Esophagus squamous epithelium (tissue), 5 donors: ENCODE measurements at regions of chr3 and their contacts with region 1.

Region 1: DNA sequence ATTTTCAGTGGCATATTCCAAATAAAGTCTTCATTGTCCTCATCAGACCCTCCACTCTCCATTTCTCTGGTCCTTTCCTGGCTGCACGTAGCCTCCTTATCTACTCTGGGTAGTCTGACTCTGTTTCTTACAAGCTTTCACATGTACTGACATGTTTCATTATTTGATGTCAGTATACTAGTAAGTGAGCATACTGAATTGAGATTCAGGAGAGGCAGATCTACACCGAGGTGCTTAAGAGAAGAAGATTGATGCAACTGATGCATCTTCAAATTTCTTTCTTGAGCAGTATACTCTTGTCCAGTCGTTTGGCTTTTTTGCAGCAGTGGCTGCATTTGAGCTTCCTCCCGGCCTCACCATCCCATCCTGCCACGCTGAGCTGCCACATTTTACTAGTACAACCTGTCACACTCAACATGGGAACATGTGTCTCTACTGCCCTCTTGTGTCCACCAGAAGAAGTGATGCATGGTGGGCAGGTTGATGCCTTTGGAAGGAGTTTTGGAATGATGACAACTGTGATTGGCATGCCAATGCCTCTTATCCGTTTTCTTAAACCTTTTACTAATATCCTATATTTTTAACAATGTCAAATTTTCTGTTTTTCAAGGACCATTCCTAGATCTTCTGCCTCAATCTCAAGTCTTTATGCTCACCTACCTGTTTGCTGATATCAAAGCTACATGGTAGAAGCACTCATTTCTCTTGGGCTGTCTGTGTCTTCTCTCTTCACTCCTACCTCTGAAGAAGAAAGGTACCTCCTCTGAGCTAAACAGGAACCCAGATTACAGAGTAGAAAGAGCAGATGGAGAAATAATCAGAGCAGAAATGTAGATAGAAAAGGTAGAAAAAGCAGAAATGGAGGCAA is 38.7 kb downstream of the GUCA1C start:
- DNase-seq: no peak
- H3K4me3 ChIP-seq: no peak overlapping the region
- H3K27ac ChIP-seq: no peak overlapping the region
- H3K4me1 ChIP-seq: no peaks in the 10 kb centered on the region
- H3K27me3 ChIP-seq: peaks cover 0 to 5% (median 0%) of the 10 kb centered on the region in 4 donors
- CTCF ChIP-seq: peak; percentile 48 to 78 (median 70)
- POLR2A ChIP-seq: no peak

Region 2: DNA sequence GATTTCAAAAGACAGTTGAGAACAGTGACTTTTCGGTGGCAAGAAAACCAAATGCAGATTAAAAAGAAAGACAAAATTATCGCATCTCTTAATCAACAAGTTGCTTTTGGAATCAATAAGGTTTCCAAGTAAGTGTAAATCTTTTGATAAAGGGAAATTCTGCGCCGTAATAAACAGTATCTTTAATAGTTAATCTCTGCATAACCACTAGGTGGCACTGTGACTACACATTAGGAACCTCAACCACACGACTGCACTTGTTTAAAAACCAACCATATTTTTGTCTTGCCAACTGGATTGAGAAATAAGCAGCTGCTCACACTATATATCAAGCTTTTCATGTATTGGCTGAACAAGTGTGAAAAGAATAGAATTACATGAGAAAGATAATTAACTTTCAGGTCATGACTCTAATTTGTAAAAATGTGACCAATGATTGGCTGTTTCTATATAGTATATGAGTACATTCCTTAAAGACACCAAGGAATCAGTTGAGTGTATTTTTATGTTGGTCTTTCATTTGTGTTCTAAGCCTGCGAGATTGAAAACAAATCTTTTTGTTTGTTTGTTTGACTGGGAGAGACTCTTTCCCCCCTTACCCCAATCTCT is 252.8 kb before region 1 on chr3:
- intact Hi-C with region 1: loop called (anchors 5 kb)
- DNase-seq: no peak
- H3K4me3 ChIP-seq: peak overlapping the region in 1 of 4 donors; percentile 25
- H3K27ac ChIP-seq: no peak overlapping the region
- H3K4me1 ChIP-seq: peaks cover 0 to 6% (median 0%) of the 10 kb centered on the region in 3 donors
- H3K27me3 ChIP-seq: no peaks in the 10 kb centered on the region
- CTCF ChIP-seq: peak; percentile 64 to 78 (median 74)
- POLR2A ChIP-seq: no peak

Region 3: GRCh38 chr3:109234300-109234699 is 319.3 kb after region 1 on chr3:
- intact Hi-C with region 1: no loop called
- DNase-seq: no peak
- H3K4me3 ChIP-seq: no peak overlapping the region
- H3K27ac ChIP-seq: no peak overlapping the region
- H3K4me1 ChIP-seq: no peaks in the 10 kb centered on the region
- H3K27me3 ChIP-seq: no peaks in the 10 kb centered on the region
- CTCF ChIP-seq: no peak
- POLR2A ChIP-seq: no peak